Activated CD4-positive, alpha-beta T cell treated with anti-CD3 and anti-CD28 coated beads, Interleukin-2, amount 10 ng/mL, durations not matched to agents 24 days and 14 days (primary cell): ENCODE measurements at regions of chr6 and their contacts with region 1.

Region 1: GRCh38 chr6:84764332-84765049 is at the start of gene TBX18:
- DNase-seq: peak; percentile 65
- H3K4me3 Mint-ChIP-seq: peak within 1 kb of the TSS; percentile 63
- H3K27ac Mint-ChIP-seq: peak within 1 kb of the TSS; percentile 82
- H3K4me1 Mint-ChIP-seq: peaks cover 5% of the 10 kb centered on the region
- H3K27me3 Mint-ChIP-seq: peaks cover 68% of the 10 kb centered on the region
- total RNA-seq, gene TBX18: not detected in 2 replicates

Region 2: DNA sequence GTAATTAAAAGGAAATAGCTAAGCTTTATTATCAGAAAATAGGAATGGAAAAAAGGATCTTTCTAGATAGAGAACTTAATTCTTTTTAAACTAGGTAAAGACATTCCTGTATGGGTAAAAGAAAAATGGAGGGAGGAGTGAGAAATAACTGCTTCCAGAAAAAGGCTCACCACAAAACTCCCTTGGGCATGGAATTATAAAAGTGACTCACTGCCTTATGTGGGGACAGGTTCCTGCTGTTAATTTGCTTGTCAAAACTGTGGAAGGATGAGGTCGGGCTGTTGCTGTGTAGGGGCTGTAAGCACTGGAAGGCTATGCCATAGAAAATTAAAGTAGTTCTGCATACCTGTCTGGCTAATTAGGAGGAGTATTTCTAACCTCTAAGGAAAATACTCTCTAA is 1857.5 kb before region 1 on chr6:
- intact Hi-C with region 1: no loop called
- DNase-seq: no peak
- H3K4me3 Mint-ChIP-seq: no peak overlapping the region
- H3K27ac Mint-ChIP-seq: no peak overlapping the region
- H3K4me1 Mint-ChIP-seq: no peaks in the 10 kb centered on the region
- H3K27me3 Mint-ChIP-seq: no peaks in the 10 kb centered on the region

Region 3: GRCh38 chr6:83708970-83709747 is 1055.3 kb before region 1 on chr6 and contains the start of gene SNAP91:
- intact Hi-C with region 1: loop called (anchors 10 kb)
- DNase-seq: no peak
- H3K4me3 Mint-ChIP-seq: peak within 1 kb of the TSS; percentile 55
- H3K27ac Mint-ChIP-seq: no peak within 1 kb of the TSS
- H3K4me1 Mint-ChIP-seq: no peaks in the 10 kb centered on the region
- H3K27me3 Mint-ChIP-seq: peaks cover 39% of the 10 kb centered on the region
- total RNA-seq, gene SNAP91: not detected in 2 replicates

Region 4: DNA sequence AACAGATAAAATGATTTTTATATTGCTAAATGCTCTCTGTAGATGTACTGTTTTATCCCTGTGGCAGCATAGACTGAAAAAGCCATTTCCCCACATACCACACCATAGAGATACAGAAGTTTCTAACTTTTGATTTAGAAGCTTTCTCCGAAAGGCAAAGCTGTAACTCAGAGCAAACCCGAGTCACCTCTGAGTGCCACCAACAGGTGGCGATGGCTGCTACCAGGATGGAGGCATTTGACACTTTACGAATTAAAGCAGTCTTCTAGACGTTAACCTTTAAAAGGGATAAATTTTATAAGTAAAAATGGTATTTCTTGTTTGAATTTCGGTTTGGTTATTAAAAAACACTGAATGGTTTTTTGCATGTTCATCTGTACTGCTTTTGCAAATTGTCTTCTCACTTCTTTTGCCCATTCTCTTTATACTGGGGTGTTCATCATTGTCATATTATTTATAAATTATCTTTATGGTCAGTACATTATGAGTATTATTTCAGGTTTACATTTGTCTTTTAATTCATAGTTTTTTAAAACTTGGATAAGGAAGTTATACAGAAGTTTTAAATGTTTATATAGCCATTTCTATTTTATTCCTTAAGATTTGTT is 336.1 kb before region 1 on chr6:
- intact Hi-C with region 1: no loop called
- DNase-seq: peak; percentile 64
- H3K4me3 Mint-ChIP-seq: no peak overlapping the region
- H3K27ac Mint-ChIP-seq: no peak overlapping the region
- H3K4me1 Mint-ChIP-seq: no peaks in the 10 kb centered on the region
- H3K27me3 Mint-ChIP-seq: peaks cover 2% of the 10 kb centered on the region

Region 5: DNA sequence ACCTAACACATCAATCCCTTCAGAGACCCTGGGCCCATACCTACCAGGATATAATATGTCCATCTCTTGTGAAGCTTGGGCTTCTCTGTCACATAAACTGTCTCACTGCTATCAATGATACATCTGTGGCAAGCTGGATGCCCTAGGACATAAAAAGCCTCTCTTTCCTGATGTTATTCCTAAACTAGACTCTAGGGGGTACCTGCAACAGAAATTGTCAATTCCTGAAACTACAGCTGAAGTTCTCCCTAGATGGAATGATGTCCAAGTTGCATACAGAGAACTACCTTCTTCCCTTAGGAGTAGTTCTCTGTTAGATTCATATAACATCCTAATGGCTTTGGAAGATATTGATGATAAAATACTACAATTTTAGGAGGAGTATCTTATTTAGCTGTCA is 35.9 kb before region 1 on chr6:
- intact Hi-C with region 1: no loop called
- DNase-seq: no peak
- H3K4me3 Mint-ChIP-seq: no peak overlapping the region
- H3K27ac Mint-ChIP-seq: no peak overlapping the region
- H3K4me1 Mint-ChIP-seq: no peaks in the 10 kb centered on the region
- H3K27me3 Mint-ChIP-seq: no peaks in the 10 kb centered on the region

Region 6: DNA sequence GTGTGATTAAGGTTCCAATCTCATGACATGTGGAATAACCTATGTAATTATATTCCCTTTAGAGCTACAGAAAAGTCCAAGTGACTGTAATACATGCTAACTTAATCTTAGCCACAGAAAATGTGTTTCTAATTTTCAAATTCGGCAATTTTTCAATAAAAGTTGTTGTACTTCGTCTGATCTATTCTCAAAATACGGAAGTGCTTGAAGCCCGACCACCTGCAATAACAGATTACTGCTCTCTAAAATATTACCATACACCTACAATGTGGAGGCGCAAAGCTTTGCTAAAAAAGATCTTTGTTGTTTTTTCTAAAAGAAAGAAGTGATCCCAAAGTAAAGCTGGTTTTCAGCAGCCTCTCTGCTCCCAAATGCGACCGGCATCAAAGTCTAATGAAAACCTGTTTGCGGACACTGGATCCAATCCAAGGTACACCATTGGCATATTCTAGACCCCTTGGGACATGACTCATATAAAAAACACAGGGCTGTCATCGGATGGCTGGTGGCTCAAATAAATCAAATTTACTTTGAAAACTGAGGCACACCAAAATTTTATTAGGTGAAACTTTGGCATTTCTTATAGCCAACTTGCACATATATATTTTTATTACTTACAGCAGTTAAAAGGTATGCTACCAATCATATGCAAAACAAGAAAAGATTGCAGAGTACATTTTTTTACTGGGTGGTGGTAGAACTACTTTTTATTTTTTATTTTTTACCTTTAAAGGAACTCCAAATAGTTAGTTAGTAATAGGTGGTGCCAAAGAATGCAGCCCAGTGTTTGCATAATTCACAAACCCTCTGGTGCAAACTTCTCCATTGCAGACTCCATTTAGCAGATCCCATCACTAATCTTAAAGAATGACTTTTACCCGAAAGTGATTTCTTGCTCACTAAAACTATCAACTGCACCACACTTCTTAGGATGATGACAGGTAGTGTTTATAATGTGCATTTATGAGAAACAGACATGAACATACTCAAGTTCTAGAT is 118.6 kb after region 1 on chr6:
- intact Hi-C with region 1: no loop called
- DNase-seq: no peak
- H3K4me3 Mint-ChIP-seq: no peak overlapping the region
- H3K27ac Mint-ChIP-seq: no peak overlapping the region
- H3K4me1 Mint-ChIP-seq: no peaks in the 10 kb centered on the region
- H3K27me3 Mint-ChIP-seq: no peaks in the 10 kb centered on the region